K562 (cell line): ENCODE measurements at regions of chr13 and their contacts with region 1.

Region 1: GRCh38 chr13:59120297-59120843 is 1043.4 kb downstream of the DIAPH3 start:
- DNase-seq: no peak
- ATAC-seq: no peak
- H3K4me3 ChIP-seq: no peak overlapping the region
- H3K27ac ChIP-seq: no peak overlapping the region
- H3K4me1 ChIP-seq: no peaks in the 10 kb centered on the region
- H3K27me3 ChIP-seq: no peaks in the 10 kb centered on the region
- CTCF ChIP-seq: no peak
- EP300 ChIP-seq: no peak
- POLR2A ChIP-seq: no peak
- RAD21 ChIP-seq: no peak

Region 2: GRCh38 chr13:58869566-58869965 is 250.8 kb before region 1 on chr13:
- CTCF ChIA-PET with region 1: no interaction called
- POLR2A ChIA-PET with region 1: no interaction called
- in situ Hi-C with region 1: loop called (anchors 10 kb)
- intact Hi-C with region 1: no loop called
- DNase-seq: no peak
- ATAC-seq: no peak
- H3K4me3 ChIP-seq: no peak overlapping the region
- H3K27ac ChIP-seq: no peak overlapping the region
- H3K4me1 ChIP-seq: no peaks in the 10 kb centered on the region
- H3K27me3 ChIP-seq: no peaks in the 10 kb centered on the region
- CTCF ChIP-seq: no peak
- EP300 ChIP-seq: no peak
- POLR2A ChIP-seq: no peak
- RAD21 ChIP-seq: no peak

Region 3: GRCh38 chr13:59144700-59145099 is 24.3 kb after region 1 on chr13:
- CTCF ChIA-PET with region 1: no interaction called
- POLR2A ChIA-PET with region 1: no interaction called
- in situ Hi-C with region 1: no loop called
- intact Hi-C with region 1: no loop called
- DNase-seq: no peak
- ATAC-seq: no peak
- H3K4me3 ChIP-seq: no peak overlapping the region
- H3K27ac ChIP-seq: no peak overlapping the region
- H3K4me1 ChIP-seq: no peaks in the 10 kb centered on the region
- H3K27me3 ChIP-seq: no peaks in the 10 kb centered on the region
- CTCF ChIP-seq: no peak
- EP300 ChIP-seq: no peak
- POLR2A ChIP-seq: no peak
- RAD21 ChIP-seq: no peak